Calu3 (cell line): ENCODE measurements at regions of chr2 and their contacts with region 1.

Region 1: GRCh38 chr2:164479460-164479859 is 141.8 kb downstream of the GRB14 start:
- DNase-seq: peak; percentile 49
- H3K4me3 Mint-ChIP-seq: no peak overlapping the region
- H3K27ac Mint-ChIP-seq: no peak overlapping the region
- H3K4me1 Mint-ChIP-seq: peaks cover 8% of the 10 kb centered on the region
- H3K27me3 Mint-ChIP-seq: no peaks in the 10 kb centered on the region
- CTCF ChIP-seq: peak; percentile 50

Region 2: DNA sequence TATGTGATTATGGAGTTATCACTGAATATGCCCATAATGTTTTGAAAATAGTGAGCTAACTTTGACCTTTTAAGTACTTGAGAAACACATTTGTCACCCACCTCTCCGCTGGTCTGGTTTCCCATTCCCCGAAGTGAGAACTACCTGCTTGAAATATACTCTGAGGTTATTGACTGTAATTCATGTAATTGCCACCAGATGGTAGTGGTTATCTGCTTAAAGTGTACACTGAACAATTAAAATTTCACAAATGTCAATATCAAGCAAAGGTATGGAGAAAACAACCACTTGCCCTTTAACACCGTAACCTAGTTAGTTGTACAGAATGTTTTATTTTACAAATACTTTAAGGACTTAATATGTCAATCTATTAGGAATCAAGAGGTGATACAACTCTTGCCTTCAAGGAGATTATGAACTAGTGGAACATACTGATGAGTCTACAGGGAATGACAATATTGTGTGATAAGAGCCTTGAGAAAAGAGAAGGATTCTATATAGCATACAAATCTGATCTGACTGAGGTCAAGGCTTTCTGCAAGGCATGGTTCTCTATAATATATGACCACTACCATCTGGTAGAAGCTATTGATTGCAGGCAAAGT is 1324.1 kb before region 1 on chr2:
- CTCF ChIA-PET with region 1: no interaction called
- intact Hi-C with region 1: loop called (anchors 1 kb)
- DNase-seq: peak; percentile 19
- H3K4me3 Mint-ChIP-seq: no peak overlapping the region
- H3K27ac Mint-ChIP-seq: no peak overlapping the region
- H3K4me1 Mint-ChIP-seq: peaks cover 8% of the 10 kb centered on the region
- H3K27me3 Mint-ChIP-seq: no peaks in the 10 kb centered on the region
- CTCF ChIP-seq: no peak

Region 3: GRCh38 chr2:163182764-163183354 is 1296.6 kb before region 1 on chr2:
- CTCF ChIA-PET with region 1: no interaction called
- intact Hi-C with region 1: loop called (anchors 2 kb)
- DNase-seq: no peak
- H3K4me3 Mint-ChIP-seq: no peak overlapping the region
- H3K27ac Mint-ChIP-seq: no peak overlapping the region
- H3K4me1 Mint-ChIP-seq: no peaks in the 10 kb centered on the region
- H3K27me3 Mint-ChIP-seq: no peaks in the 10 kb centered on the region
- CTCF ChIP-seq: no peak

Region 4: DNA sequence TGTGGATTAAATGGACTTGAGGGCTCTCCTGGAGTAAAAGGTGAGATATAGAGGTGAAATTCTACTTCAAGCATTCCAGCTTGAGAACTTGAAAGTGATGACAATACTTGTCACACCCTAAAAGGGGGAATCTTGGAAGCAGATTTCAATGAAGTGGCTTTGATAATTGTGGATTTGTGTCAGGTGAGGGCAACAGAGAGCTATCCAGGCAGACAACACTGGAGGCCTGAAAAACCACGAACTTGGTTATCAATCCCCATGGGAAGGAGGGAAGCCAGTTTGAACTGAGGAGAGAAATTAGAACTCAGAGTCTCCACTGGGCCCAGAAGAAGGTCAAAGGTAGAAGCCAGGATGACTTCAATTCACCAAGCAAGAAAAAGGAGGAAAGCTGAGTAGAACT is 1007.5 kb before region 1 on chr2:
- CTCF ChIA-PET with region 1: no interaction called
- intact Hi-C with region 1: loop called (anchors 2 kb)
- DNase-seq: peak; percentile 20
- H3K4me3 Mint-ChIP-seq: no peak overlapping the region
- H3K27ac Mint-ChIP-seq: no peak overlapping the region
- H3K4me1 Mint-ChIP-seq: peaks cover 8% of the 10 kb centered on the region
- H3K27me3 Mint-ChIP-seq: no peaks in the 10 kb centered on the region
- CTCF ChIP-seq: peak; percentile 34

Region 5: GRCh38 chr2:164084066-164084465 is 395.4 kb before region 1 on chr2:
- CTCF ChIA-PET with region 1: no interaction called
- intact Hi-C with region 1: loop called (anchors 5 kb)
- DNase-seq: no peak
- H3K4me3 Mint-ChIP-seq: no peak overlapping the region
- H3K27ac Mint-ChIP-seq: no peak overlapping the region
- H3K4me1 Mint-ChIP-seq: no peaks in the 10 kb centered on the region
- H3K27me3 Mint-ChIP-seq: no peaks in the 10 kb centered on the region
- CTCF ChIP-seq: no peak